ENCODE measurements at regions of chr5 and their contacts with region 1.

Region 1: GRCh38 chr5:17381932-17382331 is 116.1 kb upstream of the TAF11L2 start:
- DNase-seq: no peak
- H3K4me3 ChIP-seq: no peak overlapping the region
- CTCF ChIP-seq: no peak

Region 2: DNA sequence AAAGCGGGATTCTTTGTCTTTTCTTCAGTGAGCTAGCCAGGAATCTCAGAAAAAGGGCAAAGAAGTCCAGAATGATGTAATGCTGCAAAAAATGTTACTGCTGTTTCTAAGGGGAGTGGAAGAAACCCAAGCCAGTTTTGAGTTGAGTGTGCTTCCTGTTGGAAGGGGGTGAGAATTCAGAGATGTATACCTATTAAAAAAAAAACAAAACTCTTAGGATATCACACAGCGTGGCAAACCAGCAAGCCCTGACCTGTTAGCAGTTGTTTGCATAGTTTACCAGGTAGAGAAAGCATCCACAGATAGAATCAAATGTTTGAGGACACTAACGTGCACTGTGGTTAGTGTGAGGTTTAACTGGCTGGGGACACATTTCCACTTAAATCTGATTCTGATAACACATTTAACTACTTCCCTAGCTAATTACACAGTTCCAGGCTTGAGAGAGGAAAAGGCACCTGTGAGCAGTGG is 153.1 kb before region 1 on chr5:
- in situ Hi-C with region 1: loop called (anchors 5 kb)
- DNase-seq: no peak
- H3K4me3 ChIP-seq: no peak overlapping the region
- CTCF ChIP-seq: no peak

Measured in astrocyte of the cerebellum (primary cell).